Cardiac septum (tissue), 1 donor: ENCODE measurements at regions of chr4 and their contacts with region 1.

Region 1: GRCh38 chr4:143335979-143336780 is 496 bp upstream of the GAB1 start:
- DNase-seq: peak; percentile 95

Region 2: GRCh38 chr4:143184217-143185116 is 151.7 kb before region 1 on chr4 and contains the start of gene USP38:
- intact Hi-C with region 1: loop called (anchors 2 kb)
- DNase-seq: peak; percentile 95
- total RNA-seq, gene USP38: 18.7 TPM

Region 3: GRCh38 chr4:143294310-143294709 is 41.9 kb before region 1 on chr4:
- intact Hi-C with region 1: loop called (anchors 2 kb)
- DNase-seq: no peak

Region 4: DNA sequence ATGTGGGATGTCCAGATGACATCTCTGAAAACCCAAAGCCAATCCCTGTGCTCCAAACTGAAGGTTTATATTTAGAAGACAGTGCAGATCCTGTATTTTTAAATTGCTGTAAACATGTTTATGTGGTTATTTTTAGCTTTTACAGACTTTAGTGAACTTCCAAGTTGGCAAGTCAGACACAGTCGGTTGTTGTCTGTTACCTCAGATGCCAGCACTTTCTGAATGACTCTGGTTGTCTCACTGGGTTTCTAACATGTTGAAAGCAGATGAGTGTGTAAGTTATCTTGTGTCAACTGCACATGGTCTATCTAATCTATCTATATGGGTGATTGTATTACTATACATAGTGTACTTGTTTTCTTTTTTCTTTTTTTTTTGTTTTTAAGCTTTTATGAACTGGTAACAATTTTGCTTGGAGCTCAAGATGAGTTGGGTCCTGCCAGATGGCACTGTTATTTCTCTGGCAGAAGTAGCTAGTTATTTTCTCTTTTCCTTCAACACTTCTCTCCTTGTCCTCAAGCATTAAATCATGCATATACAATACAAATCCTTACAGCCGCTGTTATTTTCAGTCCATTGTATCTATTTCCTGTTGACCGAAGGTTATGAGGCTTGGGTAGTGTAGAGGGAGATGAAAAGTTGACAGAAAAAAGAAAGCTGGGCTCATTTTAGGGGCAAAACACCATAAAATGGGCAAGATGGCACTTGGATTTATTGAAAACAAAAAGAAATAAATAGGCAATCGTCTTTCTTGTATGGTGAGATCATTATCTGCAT is 66.8 kb after region 1 on chr4:
- intact Hi-C with region 1: loop called (anchors 2 kb)
- DNase-seq: no peak

Region 5: GRCh38 chr4:143513306-143514168 is 177.4 kb after region 1 on chr4 and contains the start of gene SMARCA5:
- intact Hi-C with region 1: loop called (anchors 2 kb)
- DNase-seq: peak; percentile 98
- total RNA-seq, gene SMARCA5: 37.7 TPM